GM10248 (cell line): ENCODE measurements at regions of chr14 and their contacts with region 1.

Region 1: GRCh38 chr14:31420319-31421111 is at the start of gene HEATR5A:
- DNase-seq: peak; percentile 95
- CTCF ChIP-seq: peak; percentile 14

Region 2: DNA sequence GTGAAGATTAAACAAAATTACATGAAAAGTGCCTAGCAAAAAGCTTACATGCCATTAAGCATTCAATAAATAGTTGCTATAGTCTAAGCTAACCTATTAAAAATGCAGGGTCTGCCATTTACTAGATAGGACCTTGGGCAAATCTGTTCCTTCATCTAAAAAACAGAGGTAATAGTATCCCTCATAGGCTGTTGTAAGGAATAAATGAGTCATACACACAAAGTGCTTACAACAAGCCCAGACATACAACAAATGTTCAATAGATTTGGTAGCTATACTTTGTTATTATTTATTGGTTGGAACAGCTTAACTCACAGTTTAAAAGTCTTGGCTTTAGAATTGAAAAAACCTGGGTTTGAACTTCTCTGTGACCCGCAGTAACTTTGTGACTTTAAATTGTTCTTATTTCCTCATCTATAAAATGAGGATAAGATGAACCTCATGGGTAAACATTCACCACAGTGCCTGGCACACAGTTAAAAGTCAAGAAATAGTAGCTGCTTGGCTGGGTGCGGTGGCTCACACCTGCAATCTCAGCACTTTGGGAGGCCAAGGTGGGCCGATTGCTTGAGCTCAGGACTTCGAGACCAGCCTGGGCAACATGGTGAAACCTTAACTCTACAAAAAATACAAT is 24.8 kb before region 1 on chr14:
- CTCF ChIA-PET with region 1: interaction called, 12 read pairs
- POLR2A ChIA-PET with region 1: interaction called, 3 read pairs
- DNase-seq: no peak
- CTCF ChIP-seq: no peak

Region 3: DNA sequence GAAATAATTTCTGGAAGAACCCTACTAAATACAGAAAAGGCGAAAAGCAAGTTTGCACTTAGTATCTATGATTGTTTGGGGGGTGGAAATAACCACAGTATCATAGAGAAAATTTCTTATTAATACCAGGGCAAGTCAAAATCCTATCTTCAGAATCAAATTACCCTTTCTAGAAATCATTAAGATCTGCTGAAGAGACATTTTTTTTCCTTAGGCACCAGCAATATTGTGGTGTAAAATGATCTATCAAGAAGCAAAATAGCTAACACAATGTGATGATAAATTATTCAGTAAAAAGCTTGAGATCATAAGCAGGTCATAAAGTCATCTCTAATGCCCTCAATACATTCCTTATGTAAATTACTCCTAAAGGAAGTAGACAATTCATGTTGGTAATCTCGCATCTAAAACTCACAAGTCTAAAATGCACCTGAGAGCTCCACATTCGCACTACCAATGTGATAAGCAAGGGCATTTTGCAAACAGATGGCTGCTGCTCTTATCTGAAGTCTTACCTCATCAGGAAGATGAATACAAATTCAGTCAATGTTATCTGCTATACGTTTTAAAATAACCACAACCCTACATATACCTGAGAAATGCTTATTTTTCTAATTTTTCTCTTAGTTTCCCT is 14.8 kb before region 1 on chr14:
- CTCF ChIA-PET with region 1: interaction called, 20 read pairs
- POLR2A ChIA-PET with region 1: interaction called, 10 read pairs
- DNase-seq: no peak
- CTCF ChIP-seq: no peak

Region 4: GRCh38 chr14:31435276-31435675 is 14.8 kb after region 1 on chr14:
- CTCF ChIA-PET with region 1: interaction called, 10 read pairs
- POLR2A ChIA-PET with region 1: interaction called, 3 read pairs
- DNase-seq: no peak
- CTCF ChIP-seq: no peak

Region 5: GRCh38 chr14:31449971-31450610 is 29.6 kb after region 1 on chr14:
- CTCF ChIA-PET with region 1: interaction called, 15 read pairs
- POLR2A ChIA-PET with region 1: interaction called, 4 read pairs
- DNase-seq: peak; percentile 33
- CTCF ChIP-seq: peak; percentile 50

Region 6: GRCh38 chr14:31678421-31679249 is 258.1 kb after region 1 on chr14:
- CTCF ChIA-PET with region 1: no interaction called
- POLR2A ChIA-PET with region 1: no interaction called
- DNase-seq: no peak
- CTCF ChIP-seq: no peak